Left colon (tissue), 2 donors: ENCODE measurements at regions of chr5 and their contacts with region 1.

Region 1: DNA sequence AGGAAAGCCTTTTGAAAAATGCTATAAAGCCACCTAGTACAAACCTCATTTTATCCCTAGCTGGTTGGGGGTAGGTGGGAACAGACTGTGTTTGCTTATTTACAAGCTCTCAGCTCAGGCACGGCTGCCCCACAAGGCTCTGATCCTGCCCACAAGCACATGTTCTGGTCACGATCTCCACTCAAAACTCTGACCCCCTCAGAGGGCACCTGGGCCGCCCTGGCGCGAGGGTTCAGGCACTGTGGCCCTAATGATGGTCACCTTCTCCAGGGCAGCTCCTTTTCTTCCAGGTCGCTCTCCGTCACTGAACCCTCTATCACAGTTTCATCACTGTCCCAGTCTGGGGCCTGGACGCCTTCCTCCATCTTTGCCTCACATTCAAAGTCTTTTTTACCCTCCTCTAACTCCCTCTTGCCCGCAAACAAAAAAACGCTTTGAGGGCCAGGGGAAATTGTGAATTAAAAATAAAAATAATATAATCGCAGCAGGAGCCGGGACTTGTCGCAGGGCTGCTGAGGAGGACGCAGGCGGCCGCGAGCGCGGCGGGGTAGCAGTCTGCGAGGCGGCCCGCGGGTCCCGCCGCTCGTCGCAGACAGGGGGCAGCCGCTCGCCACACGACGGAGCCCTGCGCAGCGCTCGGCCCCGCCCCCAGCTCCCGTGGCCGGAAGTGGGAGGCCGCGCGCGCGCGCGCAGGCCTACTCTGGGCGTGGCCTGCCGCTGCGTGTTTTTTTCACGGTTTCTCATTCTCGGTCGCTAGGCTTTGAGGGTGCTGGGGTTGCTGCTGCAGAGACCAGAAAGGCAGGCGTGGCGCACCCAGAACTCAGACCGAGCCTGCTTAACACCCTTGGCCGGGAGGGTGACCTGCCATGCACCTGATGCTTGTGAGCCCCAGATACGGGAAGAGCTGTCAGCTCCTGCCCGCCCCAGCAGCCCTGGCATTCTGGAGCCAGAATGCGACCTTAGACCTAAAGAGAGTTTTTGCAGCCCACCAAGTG is at the start of gene ANKRD31:
- DNase-seq: peak; percentile 71 to 93
- ATAC-seq: peak; percentile 100
- total RNA-seq, gene ANKRD31: 0.11 TPM in 1 of 2 donors, not detected in the other

Region 2: GRCh38 chr5:75156585-75156984 is 80.0 kb before region 1 on chr5:
- intact Hi-C with region 1: no loop called
- DNase-seq: no peak
- ATAC-seq: no peak

Region 3: GRCh38 chr5:75336625-75337339 is 100.2 kb after region 1 on chr5 and contains the start of gene HMGCR:
- intact Hi-C with region 1: loop called in 1 of 2 experiments (anchors 5 kb)
- DNase-seq: peak; percentile 98 to 100
- ATAC-seq: peak; percentile 89
- total RNA-seq, gene HMGCR: 182 to 293 TPM

Region 4: DNA sequence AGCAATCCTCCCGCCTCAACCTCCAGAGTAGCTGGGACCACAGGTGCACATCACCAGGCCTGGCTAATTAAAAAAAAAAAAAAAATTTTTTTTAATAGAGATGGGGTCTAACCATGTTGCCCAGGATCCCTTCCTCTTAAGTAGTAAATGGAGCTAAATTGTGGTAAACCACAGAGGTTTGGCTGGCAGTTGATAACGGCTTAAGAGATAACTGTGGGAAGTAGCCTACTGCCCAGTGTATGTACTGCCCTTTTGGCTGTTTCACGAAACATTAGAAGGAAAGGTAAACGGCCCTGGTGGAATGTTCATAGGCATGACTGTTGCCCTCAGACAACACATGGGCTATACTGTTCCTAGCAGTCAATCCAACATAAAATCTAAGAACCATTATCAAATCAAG is 144.8 kb after region 1 on chr5:
- intact Hi-C with region 1: no loop called
- DNase-seq: no peak
- ATAC-seq: no peak

Region 5: GRCh38 chr5:75670577-75670976 is 434.0 kb after region 1 on chr5:
- intact Hi-C with region 1: loop called in 1 of 2 experiments (anchors 10 kb)
- DNase-seq: no peak
- ATAC-seq: no peak